ENCODE measurements at regions of chr21 and their contacts with region 1.

Region 1: DNA sequence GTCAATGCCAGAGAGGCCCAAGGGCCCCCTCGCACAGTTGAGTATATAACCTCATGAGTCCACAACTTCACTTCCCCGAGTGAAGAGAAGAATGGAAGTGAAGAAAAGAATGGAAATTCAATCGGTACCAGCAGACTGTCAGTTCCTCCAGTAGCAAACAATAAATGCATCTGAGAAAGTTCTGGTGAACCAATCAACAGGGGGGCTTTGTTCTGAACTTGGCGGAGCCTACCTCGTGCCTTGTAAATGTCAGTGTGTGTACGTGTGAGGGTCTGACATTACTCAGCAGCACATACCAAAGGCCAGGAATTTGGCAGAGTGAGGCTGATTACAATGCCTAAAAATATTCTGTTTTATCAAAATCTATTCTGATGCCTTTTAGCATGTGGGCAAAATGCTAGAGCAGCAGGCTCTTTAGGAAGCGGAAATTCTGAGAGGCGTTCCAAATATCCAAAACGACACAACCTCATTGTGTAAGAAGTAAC is 238.5 kb downstream of the LTN1 start:
- DNase-seq: peak in 4 of 7 donors; percentile 4 to 56 (median 18)
- H3K4me3 ChIP-seq: no peak overlapping the region
- H3K27ac ChIP-seq: peak overlapping the region in 2 of 5 donors; percentile 41 to 51
- H3K4me1 ChIP-seq: no peaks in the 10 kb centered on the region
- H3K27me3 ChIP-seq: no peaks in the 10 kb centered on the region
- CTCF ChIP-seq: no peak
- POLR2A ChIP-seq: no peak

Region 2: GRCh38 chr21:28111151-28111619 is 643.0 kb before region 1 on chr21:
- intact Hi-C with region 1: no loop called
- DNase-seq: peak; percentile 25 to 81 (median 49)
- H3K4me3 ChIP-seq: no peak overlapping the region
- H3K27ac ChIP-seq: no peak overlapping the region
- H3K4me1 ChIP-seq: no peaks in the 10 kb centered on the region
- H3K27me3 ChIP-seq: no peaks in the 10 kb centered on the region
- CTCF ChIP-seq: no peak
- POLR2A ChIP-seq: no peak

Region 3: DNA sequence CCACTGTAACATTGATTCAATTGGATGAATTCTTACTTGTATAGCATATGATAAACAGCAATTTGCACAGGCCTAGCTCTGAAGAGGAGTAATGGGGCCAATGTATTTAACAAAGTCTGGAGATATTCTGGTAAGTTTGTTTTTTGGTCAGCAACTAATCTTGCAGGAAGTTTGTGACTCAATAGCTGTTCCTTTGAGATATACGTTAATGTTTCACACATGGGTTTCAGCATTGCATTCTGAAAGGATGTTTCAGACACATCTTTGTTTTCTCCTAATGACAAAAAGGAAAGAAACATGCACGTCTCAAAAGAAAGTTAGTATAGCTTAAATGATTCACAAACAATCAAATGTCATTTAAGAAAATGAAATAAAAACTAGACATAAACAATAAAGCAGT is 189.5 kb after region 1 on chr21:
- intact Hi-C with region 1: loop called in 1 of 2 experiments (anchors 10 kb)
- DNase-seq: no peak
- H3K4me3 ChIP-seq: no peak overlapping the region
- H3K27ac ChIP-seq: no peak overlapping the region
- H3K4me1 ChIP-seq: peaks cover 0 to 5% of the 10 kb centered on the region in 2 donors
- H3K27me3 ChIP-seq: no peaks in the 10 kb centered on the region
- CTCF ChIP-seq: no peak
- POLR2A ChIP-seq: no peak